ENCODE measurements at regions of chr9 and their contacts with region 1.

Region 1: DNA sequence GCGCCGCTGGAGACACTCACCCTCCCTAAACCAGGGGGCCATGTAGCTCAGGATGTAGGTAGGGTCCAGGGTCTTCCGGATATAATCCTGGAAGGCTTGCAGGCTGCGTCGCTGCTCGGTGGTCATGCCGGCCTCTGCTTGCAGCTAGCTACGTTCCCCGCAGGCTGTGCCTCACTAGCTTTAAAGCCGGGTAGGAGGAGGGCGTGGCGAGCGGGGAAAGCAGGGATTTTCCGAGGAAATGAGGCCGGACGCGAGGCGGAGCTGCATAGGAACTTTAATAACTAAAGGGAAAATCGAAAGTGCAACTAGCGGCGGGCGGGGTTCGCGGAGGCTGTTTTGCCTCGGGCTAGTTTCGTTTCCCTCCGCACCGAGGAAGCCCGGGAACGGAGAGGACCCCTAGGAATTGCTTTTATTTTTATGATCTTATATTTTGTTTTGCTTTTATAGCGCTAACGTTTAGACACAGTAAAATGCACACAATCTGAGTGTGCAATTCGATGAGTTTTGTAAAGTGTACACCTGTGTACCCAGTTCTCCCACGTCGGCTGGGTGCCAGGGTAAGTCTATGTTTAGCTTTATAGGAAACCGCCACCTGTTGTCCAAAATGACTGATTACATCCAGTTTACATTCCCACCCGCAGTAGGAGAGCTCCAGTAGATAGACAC is at the start of gene RIGI:
- DNase-seq: peak; percentile 90 to 94 (median 91)
- H3K4me3 ChIP-seq: peak within 1 kb of the TSS; percentile 59
- H3K27ac ChIP-seq: peak within 1 kb of the TSS; percentile 77 to 85
- H3K4me1 ChIP-seq: peaks cover 9% of the 10 kb centered on the region
- H3K27me3 ChIP-seq: no peaks in the 10 kb centered on the region
- CTCF ChIP-seq: peak in 1 of 3 donors; percentile 48
- EP300 ChIP-seq: no peak
- POLR2A ChIP-seq: peak; percentile 21
- total RNA-seq, gene RIGI: 6.4 to 9.5 (median 7.1) TPM

Region 2: GRCh38 chr9:31969552-31969951 is 556.6 kb before region 1 on chr9:
- intact Hi-C with region 1: no loop called
- DNase-seq: no peak
- H3K4me3 ChIP-seq: no peak overlapping the region
- H3K27ac ChIP-seq: no peak overlapping the region
- H3K4me1 ChIP-seq: no peaks in the 10 kb centered on the region
- H3K27me3 ChIP-seq: no peaks in the 10 kb centered on the region
- CTCF ChIP-seq: no peak
- EP300 ChIP-seq: no peak
- POLR2A ChIP-seq: no peak

Region 3: DNA sequence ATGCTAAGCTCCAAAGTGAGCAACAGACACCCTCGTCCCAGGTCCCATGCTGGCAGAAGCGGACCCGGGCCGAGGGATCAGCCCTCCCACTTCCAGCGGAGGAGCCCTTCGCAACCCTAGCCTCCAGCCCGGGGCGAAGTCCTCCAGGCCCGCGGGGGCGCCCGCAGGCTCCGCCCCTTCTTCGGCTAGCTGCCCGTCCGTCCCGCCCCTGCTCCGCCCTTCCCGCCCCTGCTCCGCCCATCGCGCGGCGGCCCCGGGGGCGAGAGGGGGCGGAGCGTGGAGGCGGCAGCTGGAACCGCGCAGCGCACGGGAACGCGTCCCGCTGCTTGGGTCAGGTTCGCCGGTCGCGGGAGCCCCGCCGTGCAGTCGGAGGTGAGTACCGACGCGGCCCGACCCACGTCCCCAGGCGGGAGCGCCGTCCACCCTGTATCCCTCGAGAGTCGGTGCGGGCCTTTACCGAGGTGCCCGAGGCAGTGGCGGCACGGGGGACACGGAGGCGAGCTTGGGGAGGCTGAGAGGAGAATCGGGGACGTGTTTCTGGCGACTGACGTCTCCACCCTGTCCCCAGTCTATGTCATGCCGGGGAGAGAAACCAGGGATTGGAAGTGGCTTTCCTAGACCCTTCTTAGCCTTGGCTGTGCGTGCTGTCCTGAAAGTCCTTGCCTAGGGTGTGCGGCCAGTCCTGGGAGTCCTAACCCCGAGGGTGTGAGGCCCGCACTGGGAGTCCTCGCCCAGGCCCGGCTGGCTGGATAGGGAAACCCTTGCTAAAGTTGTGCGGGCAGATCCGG is 141.6 kb before region 1 on chr9 and contains the start of gene ACO1:
- intact Hi-C with region 1: loop called in 1 of 4 experiments (anchors 5 kb)
- DNase-seq: peak; percentile 89 to 95 (median 94)
- H3K4me3 ChIP-seq: peak within 1 kb of the TSS; percentile 90
- H3K27ac ChIP-seq: peak within 1 kb of the TSS; percentile 47 to 71
- H3K4me1 ChIP-seq: peaks cover 8% of the 10 kb centered on the region
- H3K27me3 ChIP-seq: no peaks in the 10 kb centered on the region
- CTCF ChIP-seq: no peak
- EP300 ChIP-seq: no peak
- POLR2A ChIP-seq: peak; percentile 83
- total RNA-seq, gene ACO1: 21.8 to 46.3 (median 30.5) TPM

Region 4: GRCh38 chr9:32550562-32551433 is 24.6 kb after region 1 on chr9:
- intact Hi-C with region 1: loop called in 1 of 4 experiments (anchors 2 kb)
- DNase-seq: peak; percentile 94 to 97 (median 96)
- H3K4me3 ChIP-seq: peak overlapping the region; percentile 60
- H3K27ac ChIP-seq: peak overlapping the region; percentile 95 to 99
- H3K4me1 ChIP-seq: no peaks in the 10 kb centered on the region
- H3K27me3 ChIP-seq: no peaks in the 10 kb centered on the region
- CTCF ChIP-seq: no peak
- EP300 ChIP-seq: no peak
- POLR2A ChIP-seq: peak; percentile 68

Measured in ovary (tissue), 10 donors.